Activated CD4-positive, alpha-beta T cell treated with anti-CD3 and anti-CD28 coated beads for 36 hours (primary cell): ENCODE measurements at regions of chr20 and their contacts with region 1.

Region 1: GRCh38 chr20:2172305-2173175 is 70.9 kb downstream of the STK35 start:
- DNase-seq: peak; percentile 82
- ATAC-seq: peak; percentile 72
- H3K4me3 Mint-ChIP-seq: peak overlapping the region; percentile 2
- H3K27ac Mint-ChIP-seq: no peak overlapping the region
- H3K4me1 Mint-ChIP-seq: peaks cover 2% of the 10 kb centered on the region
- H3K27me3 Mint-ChIP-seq: peaks cover 11% of the 10 kb centered on the region

Region 2: DNA sequence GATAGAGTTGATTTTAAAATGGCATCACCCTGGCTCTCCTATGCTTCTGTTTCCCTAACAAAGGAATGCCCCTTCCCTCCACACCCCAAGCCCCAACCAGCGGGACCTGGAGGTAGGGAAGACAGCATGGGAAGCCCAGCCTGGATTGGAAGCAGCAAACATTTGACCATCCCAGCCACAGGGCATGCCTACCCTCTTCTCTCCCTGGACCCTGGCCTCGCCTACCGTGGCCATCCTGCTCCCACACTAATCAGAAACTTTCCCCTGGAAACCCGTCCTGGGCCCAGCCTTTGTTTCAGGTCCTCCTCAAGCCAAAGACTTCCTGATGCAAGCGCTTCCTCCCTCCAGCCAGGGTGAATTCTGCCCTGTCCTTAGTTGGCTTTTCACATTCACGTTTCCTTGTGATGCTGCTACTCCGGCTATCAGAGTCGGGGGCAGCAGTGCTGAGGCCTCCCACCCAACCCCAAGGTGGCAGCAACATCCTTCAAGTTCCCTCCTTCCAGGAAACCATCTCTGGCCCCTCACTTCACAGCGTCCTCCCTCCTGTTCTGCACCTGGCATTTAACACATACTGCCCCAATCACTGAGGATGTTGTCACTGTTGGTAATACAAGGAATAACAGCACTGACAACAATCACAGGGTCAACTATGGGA is 1238.2 kb before region 1 on chr20:
- CTCF ChIA-PET with region 1: no interaction called
- POLR2A ChIA-PET with region 1: no interaction called
- intact Hi-C with region 1: no loop called
- DNase-seq: no peak
- ATAC-seq: no peak
- H3K4me3 Mint-ChIP-seq: no peak overlapping the region
- H3K27ac Mint-ChIP-seq: no peak overlapping the region
- H3K4me1 Mint-ChIP-seq: no peaks in the 10 kb centered on the region
- H3K27me3 Mint-ChIP-seq: no peaks in the 10 kb centered on the region

Region 3: GRCh38 chr20:1965520-1966351 is 206.8 kb before region 1 on chr20:
- CTCF ChIA-PET with region 1: interaction called, 61 read pairs
- POLR2A ChIA-PET with region 1: no interaction called
- intact Hi-C with region 1: loop called (anchors 1 kb)
- DNase-seq: peak; percentile 93
- ATAC-seq: peak; percentile 93
- H3K4me3 Mint-ChIP-seq: peak overlapping the region; percentile 34
- H3K27ac Mint-ChIP-seq: no peak overlapping the region
- H3K4me1 Mint-ChIP-seq: peaks cover 11% of the 10 kb centered on the region
- H3K27me3 Mint-ChIP-seq: peaks cover 20% of the 10 kb centered on the region

Region 4: GRCh38 chr20:2162125-2162822 is 10.3 kb before region 1 on chr20:
- CTCF ChIA-PET with region 1: interaction called, 15 read pairs
- POLR2A ChIA-PET with region 1: interaction called, 3 read pairs
- intact Hi-C with region 1: no loop called
- DNase-seq: no peak
- ATAC-seq: no peak
- H3K4me3 Mint-ChIP-seq: no peak overlapping the region
- H3K27ac Mint-ChIP-seq: no peak overlapping the region
- H3K4me1 Mint-ChIP-seq: no peaks in the 10 kb centered on the region
- H3K27me3 Mint-ChIP-seq: no peaks in the 10 kb centered on the region

Region 5: GRCh38 chr20:2195614-2196013 is 23.1 kb after region 1 on chr20:
- CTCF ChIA-PET with region 1: interaction called, 12 read pairs
- POLR2A ChIA-PET with region 1: no interaction called
- intact Hi-C with region 1: no loop called
- DNase-seq: no peak
- ATAC-seq: no peak
- H3K4me3 Mint-ChIP-seq: no peak overlapping the region
- H3K27ac Mint-ChIP-seq: no peak overlapping the region
- H3K4me1 Mint-ChIP-seq: no peaks in the 10 kb centered on the region
- H3K27me3 Mint-ChIP-seq: peaks cover 7% of the 10 kb centered on the region

Region 6: GRCh38 chr20:2320813-2321658 is 148.5 kb after region 1 on chr20:
- CTCF ChIA-PET with region 1: no interaction called
- POLR2A ChIA-PET with region 1: no interaction called
- intact Hi-C with region 1: no loop called
- DNase-seq: no peak
- ATAC-seq: no peak
- H3K4me3 Mint-ChIP-seq: no peak overlapping the region
- H3K27ac Mint-ChIP-seq: no peak overlapping the region
- H3K4me1 Mint-ChIP-seq: no peaks in the 10 kb centered on the region
- H3K27me3 Mint-ChIP-seq: peaks cover 9% of the 10 kb centered on the region